H1 (cell line): ENCODE measurements at regions of chr2 and their contacts with region 1.

Region 1: DNA sequence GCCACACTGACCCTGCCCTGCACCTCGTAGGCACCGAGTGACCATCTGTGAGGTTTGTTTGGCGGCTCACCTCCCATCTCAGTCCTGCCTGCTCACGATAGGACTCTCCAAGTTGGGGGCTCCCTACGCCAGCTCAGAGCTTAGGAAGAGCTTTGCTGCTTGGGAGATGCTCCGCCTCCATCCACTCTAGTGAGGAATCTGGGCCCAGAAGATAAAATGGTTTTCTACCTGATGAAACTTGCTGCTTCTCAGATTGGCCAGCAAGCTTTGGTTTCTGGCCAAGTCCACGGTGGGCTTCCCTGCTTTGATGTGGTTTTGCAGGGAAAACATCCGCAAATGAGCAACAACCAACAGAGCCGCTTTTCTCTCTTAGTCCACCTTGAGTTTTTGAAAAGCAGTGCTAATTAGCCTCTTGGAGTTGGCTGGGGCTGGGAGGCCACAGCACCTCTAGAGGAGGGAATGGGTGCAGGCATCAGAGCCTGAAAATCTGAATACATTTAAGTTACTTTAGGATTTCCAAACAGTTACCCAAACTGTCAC is 42.2 kb downstream of the THNSL2 start:
- DNase-seq: peak in 1 of 2 experiments; percentile 54
- H3K4me3 ChIP-seq: peak overlapping the region in 1 of 4 experiments; percentile 41; a peak in 1 of 8 replicates
- H3K27ac ChIP-seq: peak overlapping the region; percentile 58; the same call in 1 of the 2 replicates
- H3K4me1 ChIP-seq: peaks cover 4 to 5% (median 4%) of the 10 kb centered on the region in 4 experiments; a peak in 6 of 7 replicates
- H3K27me3 ChIP-seq: no peaks in the 10 kb centered on the region
- CTCF ChIP-seq: peak; percentile 61 to 85 (median 76)
- EP300 ChIP-seq: no peak
- POLR2A ChIP-seq: no peak
- RAD21 ChIP-seq: peak; percentile 43 to 56; a peak in 3 of 4 replicates

Region 2: GRCh38 chr2:88199912-88200682 is 12.2 kb before region 1 on chr2:
- CTCF ChIA-PET with region 1: interaction called, 19 read pairs
- POLR2A ChIA-PET with region 1: interaction called, 4 read pairs
- DNase-seq: peak in 1 of 2 experiments; percentile 73
- H3K4me3 ChIP-seq: peak overlapping the region in 3 of 4 experiments; percentile 25 to 37 (median 26); a peak in 6 of 8 replicates
- H3K27ac ChIP-seq: no peak overlapping the region
- H3K4me1 ChIP-seq: peaks cover 3 to 16% (median 8%) of the 10 kb centered on the region in 4 experiments; a peak in 6 of 7 replicates
- H3K27me3 ChIP-seq: peaks cover 1 to 12% (median 8%) of the 10 kb centered on the region in 4 experiments
- CTCF ChIP-seq: 0 out of 4 replicates have a peak, but pooled peaks of 1 of the 3 experiments have one; percentile 2
- EP300 ChIP-seq: no peak
- POLR2A ChIP-seq: no peak
- RAD21 ChIP-seq: no peak

Region 3: GRCh38 chr2:88227446-88227845 is 15.1 kb after region 1 on chr2:
- CTCF ChIA-PET with region 1: interaction called, 10 read pairs
- POLR2A ChIA-PET with region 1: interaction called, 3 read pairs
- DNase-seq: no peak
- H3K4me3 ChIP-seq: no peak overlapping the region
- H3K27ac ChIP-seq: no peak overlapping the region
- H3K4me1 ChIP-seq: peaks cover 0 to 6% (median 2%) of the 10 kb centered on the region in 4 experiments; a peak in 4 of 7 replicates
- H3K27me3 ChIP-seq: no peaks in the 10 kb centered on the region
- CTCF ChIP-seq: no peak
- EP300 ChIP-seq: no peak
- POLR2A ChIP-seq: no peak
- RAD21 ChIP-seq: no peak